ENCODE measurements at regions of chr3 and their contacts with region 1.

Region 1: GRCh38 chr3:176219970-176220369 is 977.3 kb downstream of the TBL1XR1 start:
- DNase-seq: no peak
- H3K4me3 ChIP-seq: no peak overlapping the region
- H3K27ac ChIP-seq: no peak overlapping the region
- H3K4me1 ChIP-seq: no peaks in the 10 kb centered on the region
- H3K27me3 ChIP-seq: no peaks in the 10 kb centered on the region
- CTCF ChIP-seq: no peak

Region 2: GRCh38 chr3:176159796-176160195 is 60.2 kb before region 1 on chr3:
- CTCF ChIA-PET with region 1: no interaction called
- dilution Hi-C with region 1: no loop called
- in situ Hi-C with region 1: no loop called
- intact Hi-C with region 1: no loop called
- DNase-seq: no peak
- H3K4me3 ChIP-seq: no peak overlapping the region
- H3K27ac ChIP-seq: no peak overlapping the region
- H3K4me1 ChIP-seq: no peaks in the 10 kb centered on the region
- H3K27me3 ChIP-seq: no peaks in the 10 kb centered on the region
- CTCF ChIP-seq: no peak

Region 3: GRCh38 chr3:176262071-176262470 is 42.1 kb after region 1 on chr3:
- CTCF ChIA-PET with region 1: no interaction called
- dilution Hi-C with region 1: loop called (anchors 5 kb)
- in situ Hi-C with region 1: no loop called
- intact Hi-C with region 1: no loop called
- DNase-seq: no peak
- H3K4me3 ChIP-seq: no peak overlapping the region
- H3K27ac ChIP-seq: no peak overlapping the region
- H3K4me1 ChIP-seq: no peaks in the 10 kb centered on the region
- H3K27me3 ChIP-seq: no peaks in the 10 kb centered on the region
- CTCF ChIP-seq: no peak